K562 (cell line): ENCODE measurements at regions of chr6 and their contacts with region 1.

Region 1: DNA sequence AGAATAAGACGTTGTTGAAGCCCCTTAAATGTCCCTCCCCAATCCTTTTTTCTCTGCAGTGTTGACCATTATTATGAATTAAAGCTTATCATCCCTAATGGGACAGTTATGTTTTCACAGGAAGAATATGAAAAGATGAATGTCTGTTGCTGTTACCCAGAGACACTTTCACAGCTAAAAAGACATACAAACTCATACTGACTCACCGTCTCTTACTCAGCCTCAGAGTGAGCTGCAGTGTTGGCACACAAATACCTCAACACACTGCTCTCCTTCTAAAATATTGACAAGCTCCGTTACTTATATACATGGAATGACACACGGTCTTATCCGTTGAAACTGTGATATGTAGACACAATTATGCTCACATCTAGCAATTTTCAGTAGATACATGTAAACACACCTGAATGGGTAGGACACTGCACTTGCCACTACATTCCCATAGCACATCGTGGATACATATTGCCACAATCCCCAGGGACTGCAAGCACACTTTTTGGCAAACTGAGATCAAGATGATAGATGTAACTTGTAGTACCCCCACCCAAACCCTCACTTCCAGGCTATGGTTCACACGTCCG is 9.6 kb upstream of the SAPCD1 start:
- DNase-seq: no peak
- ATAC-seq: peak; percentile 8
- H3K4me3 ChIP-seq: no peak overlapping the region
- H3K27ac ChIP-seq: 0 out of 3 replicates have a peak overlapping the region, but pooled peaks have one; percentile 0
- H3K4me1 ChIP-seq: peaks cover 5 to 15% of the 10 kb centered on the region in 2 experiments
- H3K27me3 ChIP-seq: no peaks in the 10 kb centered on the region
- CTCF ChIP-seq: no peak
- EP300 ChIP-seq: no peak
- POLR2A ChIP-seq: no peak
- RAD21 ChIP-seq: no peak

Region 2: GRCh38 chr6:31763619-31763940 is 10.8 kb after region 1 on chr6:
- CTCF ChIA-PET with region 1: no interaction called
- POLR2A ChIA-PET with region 1: interaction called, 75 read pairs
- in situ Hi-C with region 1: no loop called
- intact Hi-C with region 1: no loop called
- DNase-seq: no peak
- ATAC-seq: peak; percentile 4
- H3K4me3 ChIP-seq: no peak overlapping the region
- H3K27ac ChIP-seq: no peak overlapping the region
- H3K4me1 ChIP-seq: peaks cover 0 to 25% of the 10 kb centered on the region in 2 experiments; a peak in 3 of 5 replicates
- H3K27me3 ChIP-seq: no peaks in the 10 kb centered on the region
- CTCF ChIP-seq: no peak
- EP300 ChIP-seq: no peak
- POLR2A ChIP-seq: no peak
- RAD21 ChIP-seq: no peak